Dendritic cell treated with granulocyte-macrophage colony-stimulating factor and Interleukin-4, amounts not matched to agents 40 ng/mL and 50 ng/mL, for 4 days (primary cell): ENCODE measurements at regions of chr9 and their contacts with region 1.

Region 1: DNA sequence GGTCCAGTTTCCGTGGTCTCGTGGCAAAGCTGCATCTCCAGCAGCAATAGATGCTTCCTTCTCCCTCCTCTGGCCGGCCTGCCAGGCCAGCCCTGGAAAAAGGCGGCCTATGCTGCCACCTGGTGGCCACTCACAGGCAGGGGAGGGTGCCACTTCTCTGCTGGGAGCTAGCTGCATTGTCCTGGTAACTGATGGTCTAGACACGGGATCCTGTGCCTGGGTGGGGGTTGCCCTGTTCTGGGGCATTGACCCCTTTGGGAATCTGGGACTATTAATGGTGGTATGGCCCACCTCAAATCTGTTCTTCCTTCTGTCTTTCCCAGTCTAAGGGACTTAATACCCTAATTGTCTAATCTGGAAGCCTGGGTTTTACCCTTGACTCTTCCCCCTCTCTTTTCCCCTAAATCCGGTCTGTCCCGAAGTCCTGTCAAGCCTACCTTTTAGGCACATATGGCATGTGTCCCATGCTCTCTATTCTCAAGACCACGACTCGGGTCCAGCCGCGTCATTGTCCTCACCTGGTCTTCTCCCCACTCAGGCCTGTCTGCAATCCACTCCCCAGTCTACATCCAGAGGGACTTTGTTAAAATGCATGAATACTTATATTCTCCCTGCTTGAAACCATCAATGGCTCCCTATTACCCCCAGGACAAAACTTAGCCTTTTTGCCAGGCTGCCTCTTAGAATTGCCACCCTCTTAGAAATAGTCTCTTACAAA is 20.0 kb upstream of the PTGS1 start:
- H3K4me3 Mint-ChIP-seq: no peak overlapping the region
- H3K27ac Mint-ChIP-seq: no peak overlapping the region
- H3K4me1 Mint-ChIP-seq: peaks cover 46% of the 10 kb centered on the region
- H3K27me3 Mint-ChIP-seq: peaks cover 38% of the 10 kb centered on the region

Region 2: GRCh38 chr9:122099271-122099869 is 251.4 kb before region 1 on chr9:
- intact Hi-C with region 1: loop called (anchors 1 kb)
- H3K4me3 Mint-ChIP-seq: peak overlapping the region; percentile 37
- H3K27ac Mint-ChIP-seq: no peak overlapping the region
- H3K4me1 Mint-ChIP-seq: peaks cover 13% of the 10 kb centered on the region
- H3K27me3 Mint-ChIP-seq: peaks cover 20% of the 10 kb centered on the region

Region 3: GRCh38 chr9:122125158-122125508 is 225.7 kb before region 1 on chr9:
- intact Hi-C with region 1: loop called (anchors 1 kb)
- H3K4me3 Mint-ChIP-seq: no peak overlapping the region
- H3K27ac Mint-ChIP-seq: no peak overlapping the region
- H3K4me1 Mint-ChIP-seq: peaks cover 7% of the 10 kb centered on the region
- H3K27me3 Mint-ChIP-seq: peaks cover 52% of the 10 kb centered on the region

Region 4: DNA sequence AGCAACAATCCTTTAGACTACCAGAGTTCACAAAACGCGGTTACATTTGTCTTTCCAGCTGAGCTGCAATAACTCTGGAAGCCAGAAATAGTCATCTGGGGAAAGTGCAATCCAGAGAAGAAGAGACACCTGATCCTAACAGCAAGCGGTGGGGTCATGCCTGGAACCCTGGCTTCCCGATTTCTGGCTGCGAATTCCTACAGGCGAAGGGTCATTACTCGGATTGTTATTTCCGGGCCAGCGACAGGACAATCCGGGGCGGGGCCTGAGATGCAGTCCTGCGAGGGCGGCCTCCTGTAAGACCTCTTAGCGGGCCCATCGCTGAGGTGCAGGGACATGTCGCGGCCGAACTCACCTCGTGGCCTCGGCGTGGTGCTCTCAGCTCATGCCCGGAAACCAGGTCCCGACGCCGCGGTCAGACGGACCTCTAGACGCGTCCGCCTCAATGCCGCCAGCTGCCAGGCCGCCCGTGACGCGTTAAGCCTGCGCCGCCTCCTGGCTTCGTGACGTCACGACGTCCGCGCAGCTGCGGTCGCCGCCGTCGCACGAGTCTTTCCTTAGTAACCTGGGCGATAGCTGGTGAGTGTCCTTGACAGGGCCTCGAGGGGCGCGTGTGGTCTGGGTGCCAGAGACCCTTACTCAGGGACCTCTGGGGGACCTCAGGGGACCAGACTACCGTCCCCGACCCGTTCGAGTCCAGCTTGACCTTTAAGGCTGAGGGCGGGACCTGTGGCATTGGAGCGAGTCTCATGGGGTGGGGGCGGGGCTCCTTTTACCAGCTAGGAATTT is 86.2 kb before region 1 on chr9 and contains the starts of genes MRRF and RBM18:
- intact Hi-C with region 1: loop called (anchors 5 kb)
- H3K4me3 Mint-ChIP-seq: peak within 1 kb of the TSS; percentile 99
- H3K27ac Mint-ChIP-seq: peak within 1 kb of the TSS; percentile 98
- H3K4me1 Mint-ChIP-seq: peaks cover 47% of the 10 kb centered on the region
- H3K27me3 Mint-ChIP-seq: no peaks in the 10 kb centered on the region

Region 5: DNA sequence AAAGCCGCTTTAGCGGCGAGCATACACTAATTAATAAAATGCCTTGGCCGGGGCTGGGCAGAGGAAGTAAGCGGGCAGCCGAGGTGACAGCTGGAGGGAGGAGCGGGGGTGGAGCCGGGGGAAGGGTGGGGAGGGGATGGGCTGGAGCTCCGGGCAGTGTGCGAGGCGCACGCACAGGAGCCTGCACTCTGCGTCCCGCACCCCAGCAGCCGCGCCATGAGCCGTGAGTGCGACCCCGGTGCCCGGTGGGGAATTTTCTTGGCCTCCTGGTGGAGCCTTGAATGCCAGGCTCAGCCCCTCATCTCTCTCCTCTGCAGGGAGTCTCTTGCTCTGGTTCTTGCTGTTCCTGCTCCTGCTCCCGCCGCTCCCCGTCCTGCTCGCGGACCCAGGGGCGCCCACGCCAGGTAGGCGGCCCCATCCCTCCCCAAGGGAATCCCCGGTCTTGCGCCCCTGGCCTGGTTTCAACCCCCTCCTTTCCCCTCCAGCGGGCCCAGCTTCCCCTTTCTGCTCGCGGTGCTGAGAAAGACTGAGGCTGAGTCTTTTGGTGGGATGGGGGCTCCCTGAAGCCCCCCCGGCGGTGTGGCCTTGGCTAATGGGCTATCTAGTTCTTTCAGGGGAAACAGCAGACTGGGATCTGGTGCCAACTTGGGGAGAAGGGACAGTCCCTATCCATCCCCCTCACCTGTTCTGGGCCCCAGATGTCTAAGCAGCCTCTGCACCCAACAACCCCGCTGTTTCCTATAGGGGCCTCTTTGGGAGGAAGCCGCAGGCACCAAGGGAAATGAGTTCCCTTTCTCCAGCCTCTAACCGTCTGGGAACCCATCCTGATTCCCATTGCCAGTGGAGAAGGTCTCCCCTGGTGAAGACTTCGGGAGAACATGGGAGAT is 20.3 kb after region 1 on chr9 and contains the start of gene PTGS1:
- intact Hi-C with region 1: loop called (anchors 1 kb)
- H3K4me3 Mint-ChIP-seq: peak within 1 kb of the TSS; percentile 98
- H3K27ac Mint-ChIP-seq: peak within 1 kb of the TSS; percentile 89
- H3K4me1 Mint-ChIP-seq: peaks cover 66% of the 10 kb centered on the region
- H3K27me3 Mint-ChIP-seq: no peaks in the 10 kb centered on the region

Region 6: DNA sequence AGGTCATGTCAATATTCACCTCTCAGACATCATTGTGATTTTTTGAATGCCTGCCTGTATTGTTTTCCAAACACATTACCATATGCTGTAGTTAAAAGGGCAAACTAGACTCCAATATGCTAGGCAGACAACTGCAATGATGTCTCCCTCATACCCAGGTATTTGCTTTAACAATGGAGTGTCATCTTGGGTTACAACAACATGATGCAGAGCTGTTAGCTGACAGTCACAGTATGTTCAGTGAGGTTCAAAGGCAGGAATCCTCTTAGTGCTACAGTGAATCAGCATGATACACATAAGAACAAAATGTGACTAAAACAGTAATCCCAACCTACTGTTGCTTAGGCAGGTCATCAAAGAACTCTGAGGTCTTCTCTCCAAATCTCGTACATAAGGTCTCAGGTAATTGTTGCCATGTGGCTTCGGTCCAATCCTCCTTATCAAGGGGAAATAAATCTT is 102.9 kb after region 1 on chr9:
- intact Hi-C with region 1: loop called (anchors 10 kb)
- H3K4me3 Mint-ChIP-seq: no peak overlapping the region
- H3K27ac Mint-ChIP-seq: no peak overlapping the region
- H3K4me1 Mint-ChIP-seq: no peaks in the 10 kb centered on the region
- H3K27me3 Mint-ChIP-seq: peaks cover 12% of the 10 kb centered on the region

Region 7: GRCh38 chr9:122506964-122507363 is 156.2 kb after region 1 on chr9:
- intact Hi-C with region 1: no loop called
- H3K4me3 Mint-ChIP-seq: no peak overlapping the region
- H3K27ac Mint-ChIP-seq: no peak overlapping the region
- H3K4me1 Mint-ChIP-seq: no peaks in the 10 kb centered on the region
- H3K27me3 Mint-ChIP-seq: peaks cover 14% of the 10 kb centered on the region

Region 8: DNA sequence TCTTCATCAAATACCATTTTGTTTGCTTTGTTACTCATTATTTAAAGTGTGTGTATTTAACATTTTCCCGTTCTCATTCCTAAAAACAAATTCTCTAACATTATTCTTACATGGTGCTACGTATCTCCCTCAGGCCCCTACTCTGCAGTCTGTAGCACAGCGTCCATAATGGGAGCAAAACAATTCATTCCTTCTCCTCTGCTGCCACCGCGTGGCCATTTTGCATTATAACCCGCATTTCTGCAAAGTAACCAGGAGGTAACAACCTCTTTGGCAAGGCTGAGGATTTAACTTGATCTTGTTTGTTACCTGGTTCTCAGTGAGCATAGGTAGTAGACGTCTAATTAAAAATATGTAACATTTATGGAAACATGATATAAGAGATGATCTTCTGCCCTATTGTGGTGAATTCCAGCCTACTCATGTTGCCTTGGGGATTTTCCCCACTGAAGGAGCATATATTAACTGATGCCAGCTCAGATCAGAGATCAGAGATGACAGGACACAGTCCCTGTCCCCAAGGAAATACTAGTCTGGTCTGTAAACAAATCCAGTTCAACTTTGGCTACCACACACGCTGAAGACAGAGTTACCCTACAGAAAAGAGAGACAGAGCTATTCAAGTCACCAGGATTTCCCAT is 459.6 kb after region 1 on chr9:
- intact Hi-C with region 1: loop called (anchors 10 kb)
- H3K4me3 Mint-ChIP-seq: no peak overlapping the region
- H3K27ac Mint-ChIP-seq: no peak overlapping the region
- H3K4me1 Mint-ChIP-seq: peaks cover 11% of the 10 kb centered on the region
- H3K27me3 Mint-ChIP-seq: no peaks in the 10 kb centered on the region